ENCODE measurements at regions of chr14 and their contacts with region 1.

Region 1: DNA sequence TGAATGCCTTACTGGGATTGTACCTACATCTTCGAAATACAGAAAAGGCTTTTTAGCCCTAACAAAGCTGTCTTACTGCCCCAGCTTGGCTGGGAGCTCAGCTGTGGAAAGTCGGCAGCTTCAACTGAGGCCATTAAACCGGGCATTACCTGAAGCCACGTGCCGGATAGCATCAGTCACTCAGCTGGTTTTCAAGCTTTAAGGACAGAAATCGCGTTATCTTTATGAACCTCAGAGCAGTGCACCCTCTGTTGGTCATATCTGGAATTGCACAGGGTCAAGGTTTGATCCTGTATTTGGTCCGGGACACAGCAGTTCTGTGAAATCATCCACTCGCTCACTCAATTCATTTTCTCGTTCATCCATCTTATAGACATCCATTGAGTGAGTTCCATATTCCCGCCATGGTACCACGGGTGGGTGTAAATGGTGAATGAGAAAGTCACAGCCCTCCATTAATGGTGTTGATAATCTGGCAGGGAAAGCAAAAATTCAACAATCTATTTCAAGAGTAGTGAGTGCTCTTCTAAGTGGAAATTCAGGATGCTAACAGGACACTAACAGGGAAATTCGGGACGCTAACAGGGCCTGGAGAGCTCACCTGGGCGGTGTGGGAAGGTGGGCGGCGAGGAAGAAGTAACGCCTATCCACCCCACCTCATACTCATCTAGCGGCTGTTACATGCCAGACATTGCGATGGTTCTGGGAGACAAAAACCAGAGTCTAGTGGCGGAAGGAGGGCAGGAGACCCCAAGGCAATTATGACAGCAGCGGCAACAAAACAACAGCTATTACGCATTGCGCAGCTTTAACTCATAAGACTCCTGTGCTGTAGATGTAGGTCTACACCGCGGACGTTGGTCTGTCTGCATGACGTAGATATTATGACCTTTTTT is 60.6 kb upstream of the TCL1A start:
- DNase-seq: peak; percentile 65
- H3K4me3 Mint-ChIP-seq: no peak overlapping the region
- H3K27ac Mint-ChIP-seq: no peak overlapping the region
- H3K4me1 Mint-ChIP-seq: peaks cover 5% of the 10 kb centered on the region
- H3K27me3 Mint-ChIP-seq: peaks cover 35% of the 10 kb centered on the region
- CTCF ChIP-seq: peak; percentile 85

Region 2: GRCh38 chr14:95561001-95561412 is 213.5 kb before region 1 on chr14:
- CTCF ChIA-PET with region 1: interaction called, 31 read pairs
- POLR2A ChIA-PET with region 1: no interaction called
- intact Hi-C with region 1: loop called (anchors 1 kb)
- DNase-seq: peak; percentile 88
- H3K4me3 Mint-ChIP-seq: no peak overlapping the region
- H3K27ac Mint-ChIP-seq: no peak overlapping the region
- H3K4me1 Mint-ChIP-seq: no peaks in the 10 kb centered on the region
- H3K27me3 Mint-ChIP-seq: peaks cover 18% of the 10 kb centered on the region
- CTCF ChIP-seq: peak; percentile 96

Region 3: GRCh38 chr14:95609387-95609990 is 165.0 kb before region 1 on chr14:
- CTCF ChIA-PET with region 1: interaction called, 36 read pairs
- POLR2A ChIA-PET with region 1: interaction called, 3 read pairs
- intact Hi-C with region 1: loop called (anchors 1 kb)
- DNase-seq: peak; percentile 70
- H3K4me3 Mint-ChIP-seq: no peak overlapping the region
- H3K27ac Mint-ChIP-seq: no peak overlapping the region
- H3K4me1 Mint-ChIP-seq: no peaks in the 10 kb centered on the region
- H3K27me3 Mint-ChIP-seq: peaks cover 84% of the 10 kb centered on the region
- CTCF ChIP-seq: peak; percentile 77

Region 4: DNA sequence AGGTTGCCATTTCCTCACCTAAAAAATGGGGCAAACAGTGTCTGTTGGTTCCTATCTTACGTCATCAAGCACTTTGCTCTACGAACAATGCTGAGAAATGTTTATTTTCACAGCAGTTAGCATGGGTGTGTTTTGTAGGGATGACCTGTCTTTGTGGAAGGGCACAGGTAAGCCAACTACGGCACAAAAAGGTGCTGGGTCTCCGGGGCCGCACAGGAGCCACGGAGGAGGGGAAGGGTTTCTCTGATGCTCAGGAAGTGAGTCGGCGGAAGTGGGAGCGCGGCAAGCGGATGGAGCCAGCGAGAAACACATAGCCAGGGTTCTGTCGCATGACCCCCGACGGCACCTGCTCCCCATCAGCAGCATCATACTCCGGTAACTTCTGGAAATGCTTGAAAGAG is 153.9 kb before region 1 on chr14:
- CTCF ChIA-PET with region 1: no interaction called
- POLR2A ChIA-PET with region 1: no interaction called
- intact Hi-C with region 1: no loop called
- DNase-seq: no peak
- H3K4me3 Mint-ChIP-seq: no peak overlapping the region
- H3K27ac Mint-ChIP-seq: no peak overlapping the region
- H3K4me1 Mint-ChIP-seq: no peaks in the 10 kb centered on the region
- H3K27me3 Mint-ChIP-seq: peaks cover 71% of the 10 kb centered on the region
- CTCF ChIP-seq: no peak

Region 5: GRCh38 chr14:95741038-95741490 is 33.4 kb before region 1 on chr14:
- CTCF ChIA-PET with region 1: interaction called, 10 read pairs
- POLR2A ChIA-PET with region 1: no interaction called
- intact Hi-C with region 1: no loop called
- DNase-seq: peak; percentile 74
- H3K4me3 Mint-ChIP-seq: no peak overlapping the region
- H3K27ac Mint-ChIP-seq: no peak overlapping the region
- H3K4me1 Mint-ChIP-seq: peaks cover 12% of the 10 kb centered on the region
- H3K27me3 Mint-ChIP-seq: peaks cover 15% of the 10 kb centered on the region
- CTCF ChIP-seq: no peak

Region 6: DNA sequence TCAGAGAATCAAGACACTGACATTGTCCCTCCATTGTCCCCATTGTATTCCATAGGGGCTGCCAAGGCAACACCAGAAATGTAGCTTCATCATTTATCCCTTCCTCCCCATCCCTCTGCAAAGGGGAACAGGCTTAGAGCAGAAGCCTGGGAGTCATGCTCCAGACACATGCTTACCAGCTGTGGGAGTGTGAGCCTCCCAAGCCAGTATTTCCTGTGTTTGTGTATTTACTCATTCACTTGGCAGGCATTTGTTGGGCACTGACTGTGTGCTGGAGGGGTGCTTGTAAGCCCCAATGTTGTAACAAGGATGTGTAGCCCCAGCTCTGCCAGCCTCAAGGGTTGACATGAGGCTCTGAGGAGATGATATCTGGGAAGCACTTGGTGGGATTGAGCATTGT is 14.6 kb before region 1 on chr14:
- CTCF ChIA-PET with region 1: interaction called, 17 read pairs
- POLR2A ChIA-PET with region 1: no interaction called
- intact Hi-C with region 1: no loop called
- DNase-seq: peak; percentile 25
- H3K4me3 Mint-ChIP-seq: no peak overlapping the region
- H3K27ac Mint-ChIP-seq: no peak overlapping the region
- H3K4me1 Mint-ChIP-seq: no peaks in the 10 kb centered on the region
- H3K27me3 Mint-ChIP-seq: peaks cover 51% of the 10 kb centered on the region
- CTCF ChIP-seq: no peak

Region 7: GRCh38 chr14:95796788-95797187 is 22.3 kb after region 1 on chr14:
- CTCF ChIA-PET with region 1: interaction called, 19 read pairs
- POLR2A ChIA-PET with region 1: no interaction called
- intact Hi-C with region 1: no loop called
- DNase-seq: no peak
- H3K4me3 Mint-ChIP-seq: no peak overlapping the region
- H3K27ac Mint-ChIP-seq: no peak overlapping the region
- H3K4me1 Mint-ChIP-seq: no peaks in the 10 kb centered on the region
- H3K27me3 Mint-ChIP-seq: peaks cover 59% of the 10 kb centered on the region
- CTCF ChIP-seq: no peak